ENCODE measurements at regions of chrX and their contacts with region 1.

Region 1: GRCh38 chrX:47193475-47194193 is at the start of gene UBA1:
- DNase-seq: peak; percentile 96 to 98
- ATAC-seq: peak; percentile 89
- total RNA-seq, gene UBA1: 217 to 220 TPM

Region 2: DNA sequence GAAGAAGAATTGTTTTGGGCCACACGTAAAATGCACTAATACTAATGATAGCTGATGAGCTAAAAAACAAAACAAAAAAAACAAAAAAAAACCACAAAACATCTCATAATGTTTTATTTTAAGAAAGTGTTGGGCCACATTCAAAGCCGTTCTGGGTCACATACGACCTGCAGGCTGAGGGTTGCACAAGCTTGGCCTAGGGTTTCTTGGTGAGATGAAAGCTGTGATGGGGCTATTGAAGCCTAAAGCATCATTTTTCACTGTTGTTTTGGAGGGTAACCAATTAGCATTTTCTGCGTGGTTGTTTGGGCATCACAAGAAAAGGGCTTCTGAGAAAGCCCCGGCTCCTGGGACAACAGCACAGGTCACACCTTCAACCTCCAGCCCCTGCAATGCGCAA is 134.3 kb after region 1 on chrX:
- intact Hi-C with region 1: no loop called
- DNase-seq: no peak
- ATAC-seq: no peak

Region 3: GRCh38 chrX:47413179-47413594 is 219.6 kb after region 1 on chrX:
- intact Hi-C with region 1: no loop called
- DNase-seq: no peak
- ATAC-seq: no peak

Region 4: DNA sequence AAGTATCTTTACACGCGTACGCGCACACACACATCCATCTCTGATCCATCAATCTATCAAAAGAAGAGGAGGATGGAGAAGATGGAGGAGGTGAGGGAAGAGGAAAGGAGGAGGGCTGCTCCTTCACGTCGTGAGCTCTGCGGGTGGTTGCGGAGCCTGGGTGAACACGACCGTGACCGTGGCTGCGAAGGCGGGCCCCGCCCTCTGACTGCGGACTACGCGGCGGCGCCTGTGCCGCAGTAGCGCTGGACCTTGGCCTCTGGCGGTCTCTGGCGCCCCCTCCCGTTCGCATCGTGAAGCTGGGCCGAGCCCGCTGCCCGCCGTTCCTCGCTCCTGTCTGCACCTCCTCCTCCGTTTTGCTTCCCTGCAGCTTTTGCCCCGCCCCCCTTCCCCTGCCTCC is 329.7 kb after region 1 on chrX:
- intact Hi-C with region 1: loop called in 1 of 2 experiments (anchors 5 kb)
- DNase-seq: peak; percentile 69 to 87
- ATAC-seq: peak; percentile 98

Measured in left colon (tissue), 2 donors.